HCT116 (cell line): ENCODE measurements at regions of chr7 and their contacts with region 1.

Region 1: GRCh38 chr7:38222481-38223096 is 44.5 kb downstream of the STARD3NL start:
- DNase-seq: peak; percentile 34
- ATAC-seq: peak; percentile 78
- H3K4me3 ChIP-seq: no peak overlapping the region
- H3K27ac ChIP-seq: no peak overlapping the region
- H3K4me1 ChIP-seq: no peaks in the 10 kb centered on the region
- H3K27me3 ChIP-seq: no peaks in the 10 kb centered on the region
- CTCF ChIP-seq: peak; percentile 68 to 87 (median 73); a peak in 5 of 6 replicates
- POLR2A ChIP-seq: no peak
- RAD21 ChIP-seq: peak; percentile 77

Region 2: DNA sequence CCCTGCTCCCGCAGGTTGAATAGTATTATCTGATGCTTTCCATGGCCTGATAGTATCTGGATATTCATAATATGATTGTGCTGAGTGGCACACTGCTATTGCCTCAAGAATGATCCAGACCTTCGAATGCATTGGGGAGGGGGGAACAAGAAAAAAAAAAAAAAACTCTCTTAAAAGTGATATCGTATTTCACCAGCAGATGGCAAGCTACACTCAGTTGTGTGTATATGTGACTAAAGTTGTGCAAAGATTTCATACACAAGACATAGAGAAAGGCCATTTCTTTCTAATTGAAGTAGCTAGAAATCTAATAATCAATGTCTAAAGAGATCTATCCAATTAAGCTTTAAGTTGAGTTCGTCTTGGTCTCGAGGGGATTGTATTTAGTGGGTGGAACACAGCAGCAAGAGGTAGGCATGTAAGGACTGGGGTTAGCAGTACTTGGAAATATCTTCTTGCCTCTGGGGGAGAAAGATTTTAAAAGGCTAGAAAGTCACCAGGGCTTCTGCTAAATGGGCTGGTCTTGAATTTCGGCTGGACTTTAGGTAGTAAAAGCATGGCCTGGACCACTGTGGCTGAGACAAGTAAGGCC is 321.3 kb before region 1 on chr7:
- CTCF ChIA-PET with region 1: no interaction called
- POLR2A ChIA-PET with region 1: no interaction called
- RAD21 ChIA-PET with region 1: interaction called in 1 of 2 experiments, 4 read pairs
- intact Hi-C with region 1: loop called (anchors 1 kb)
- DNase-seq: peak; percentile 13
- ATAC-seq: peak; percentile 55; the same call in 1 of the 2 replicates
- H3K4me3 ChIP-seq: no peak overlapping the region
- H3K27ac ChIP-seq: no peak overlapping the region
- H3K4me1 ChIP-seq: peaks cover 0 to 4% of the 10 kb centered on the region in 2 experiments; a peak in 1 of 4 replicates
- H3K27me3 ChIP-seq: no peaks in the 10 kb centered on the region
- CTCF ChIP-seq: peak; percentile 32 to 71 (median 50); a peak in 3 of 6 replicates
- POLR2A ChIP-seq: no peak
- RAD21 ChIP-seq: peak; percentile 65

Region 3: DNA sequence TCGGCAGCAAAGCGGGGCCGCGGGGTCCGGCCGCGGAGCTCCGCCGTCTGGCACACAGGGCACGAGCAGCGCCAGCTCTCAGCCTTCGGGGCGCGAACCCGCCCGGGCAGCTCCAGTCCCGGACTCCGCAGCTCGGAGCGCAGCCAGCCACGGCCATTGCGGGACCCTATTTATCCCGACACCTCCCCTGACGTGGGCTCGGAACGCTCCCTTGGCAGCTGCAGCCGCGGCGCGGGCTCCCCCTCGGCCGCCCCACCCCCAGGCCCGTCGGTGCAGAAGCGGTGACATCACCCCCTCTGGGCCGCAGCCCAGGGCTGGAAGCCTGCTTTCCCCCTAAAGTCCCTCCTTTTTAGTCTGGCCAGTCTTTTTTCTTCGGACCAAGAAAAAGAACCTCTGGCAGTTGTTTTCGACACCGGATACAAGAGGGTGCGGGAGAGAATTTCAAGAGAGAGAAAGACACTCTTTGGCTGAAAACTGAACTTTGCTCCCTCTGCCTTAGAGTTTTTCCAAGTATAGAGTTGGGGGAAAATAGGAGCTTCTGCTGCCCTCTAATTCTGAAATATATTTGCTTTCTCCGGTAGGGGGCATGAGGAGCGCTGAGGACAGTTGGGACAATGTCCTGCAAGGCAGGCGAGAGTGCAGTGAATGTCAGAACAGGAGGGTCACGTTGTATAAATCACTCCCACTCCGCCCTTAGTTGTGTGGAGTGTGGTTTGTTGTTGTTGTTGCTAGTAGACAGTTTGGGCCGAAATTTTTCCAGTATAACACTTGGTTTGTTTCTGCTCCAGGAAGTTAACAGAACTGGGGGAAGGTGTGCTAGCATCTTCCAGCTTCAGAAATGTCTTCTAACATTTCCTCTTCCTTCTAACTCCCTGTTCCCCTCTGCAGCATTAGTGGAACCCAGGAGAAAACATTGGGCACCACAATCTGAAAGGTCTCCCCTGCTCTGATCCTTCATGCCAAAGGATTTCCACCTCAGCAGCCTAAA is 305.6 kb before region 1 on chr7 and contains the start of gene SFRP4:
- CTCF ChIA-PET with region 1: interaction called, 3 read pairs
- POLR2A ChIA-PET with region 1: no interaction called
- RAD21 ChIA-PET with region 1: no interaction called
- intact Hi-C with region 1: loop called (anchors 5 kb)
- DNase-seq: peak; percentile 34
- ATAC-seq: peak; percentile 67
- H3K4me3 ChIP-seq: peak within 1 kb of the TSS; percentile 12 to 35
- H3K27ac ChIP-seq: no peak within 1 kb of the TSS
- H3K4me1 ChIP-seq: peaks cover 9 to 14% of the 10 kb centered on the region in 2 experiments; a peak in 2 of 4 replicates
- H3K27me3 ChIP-seq: peaks cover 3% of the 10 kb centered on the region; the same call in 1 of the 2 replicates
- CTCF ChIP-seq: peak; percentile 43 to 68 (median 65); a peak in 5 of 6 replicates
- POLR2A ChIP-seq: no peak
- RAD21 ChIP-seq: peak; percentile 55
- total RNA-seq, gene SFRP4: 0.25 TPM

Region 4: GRCh38 chr7:38107486-38107893 is 115.1 kb before region 1 on chr7:
- CTCF ChIA-PET with region 1: interaction called, 5 read pairs
- POLR2A ChIA-PET with region 1: no interaction called
- RAD21 ChIA-PET with region 1: no interaction called
- intact Hi-C with region 1: loop called (anchors 1 kb)
- DNase-seq: peak; percentile 48
- ATAC-seq: peak; percentile 94
- H3K4me3 ChIP-seq: no peak overlapping the region
- H3K27ac ChIP-seq: no peak overlapping the region
- H3K4me1 ChIP-seq: no peaks in the 10 kb centered on the region
- H3K27me3 ChIP-seq: peaks cover 20% of the 10 kb centered on the region
- CTCF ChIP-seq: peak; percentile 79 to 89 (median 79)
- POLR2A ChIP-seq: no peak
- RAD21 ChIP-seq: peak; percentile 72

Region 5: DNA sequence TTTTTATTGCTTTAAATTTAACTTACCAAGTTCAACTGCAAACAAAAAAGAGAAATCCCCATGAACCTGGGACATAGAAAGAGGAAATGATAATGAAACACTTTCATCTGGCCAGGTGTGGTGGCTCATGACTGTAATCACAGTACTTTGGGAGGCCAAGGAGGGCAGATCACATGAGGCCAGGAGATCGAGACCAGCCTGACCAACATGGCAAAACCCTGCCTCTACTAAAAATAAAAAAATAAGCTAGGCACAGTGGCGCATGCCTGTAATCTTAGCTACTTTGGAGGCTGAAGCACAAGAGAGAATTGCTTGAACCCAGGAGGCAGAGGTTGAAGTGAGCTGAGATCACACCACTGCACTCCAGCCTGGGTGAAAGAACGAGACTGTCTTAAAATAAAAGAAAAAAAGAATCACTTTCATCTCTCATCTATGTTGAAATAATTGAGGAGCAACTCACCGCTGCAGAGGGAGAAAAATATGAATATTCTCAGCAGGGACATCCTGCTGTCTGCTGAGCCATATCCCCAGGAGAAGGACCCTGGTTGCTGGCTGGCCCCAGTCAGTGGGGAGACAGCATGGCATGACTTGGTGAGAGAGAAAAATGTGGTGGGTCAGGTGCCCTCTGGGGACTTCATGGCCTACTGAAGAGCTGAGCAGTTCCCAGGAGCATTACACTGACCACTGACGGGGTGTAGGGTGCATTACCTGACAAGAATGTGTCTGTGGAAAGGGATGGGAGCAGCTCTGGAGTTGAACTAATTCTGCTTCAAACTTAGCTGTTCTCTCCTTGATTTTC is 73.7 kb after region 1 on chr7:
- CTCF ChIA-PET with region 1: no interaction called
- POLR2A ChIA-PET with region 1: no interaction called
- RAD21 ChIA-PET with region 1: no interaction called
- intact Hi-C with region 1: no loop called
- DNase-seq: no peak
- ATAC-seq: no peak
- H3K4me3 ChIP-seq: no peak overlapping the region
- H3K27ac ChIP-seq: no peak overlapping the region
- H3K4me1 ChIP-seq: no peaks in the 10 kb centered on the region
- H3K27me3 ChIP-seq: peaks cover 15% of the 10 kb centered on the region
- CTCF ChIP-seq: no peak
- POLR2A ChIP-seq: no peak
- RAD21 ChIP-seq: no peak

Region 6: GRCh38 chr7:38318803-38319416 is 96.3 kb after region 1 on chr7:
- CTCF ChIA-PET with region 1: interaction called, 5 read pairs
- POLR2A ChIA-PET with region 1: no interaction called
- RAD21 ChIA-PET with region 1: no interaction called
- intact Hi-C with region 1: loop called (anchors 5 kb)
- DNase-seq: peak; percentile 40
- ATAC-seq: peak; percentile 95
- H3K4me3 ChIP-seq: no peak overlapping the region
- H3K27ac ChIP-seq: no peak overlapping the region
- H3K4me1 ChIP-seq: peaks cover 4 to 10% of the 10 kb centered on the region in 2 experiments; a peak in 2 of 4 replicates
- H3K27me3 ChIP-seq: 0 out of 2 replicates have a peak, but pooled peaks cover 6% of the 10 kb centered on the region
- CTCF ChIP-seq: peak; percentile 50 to 78 (median 70)
- POLR2A ChIP-seq: no peak
- RAD21 ChIP-seq: peak; percentile 72

Region 7: DNA sequence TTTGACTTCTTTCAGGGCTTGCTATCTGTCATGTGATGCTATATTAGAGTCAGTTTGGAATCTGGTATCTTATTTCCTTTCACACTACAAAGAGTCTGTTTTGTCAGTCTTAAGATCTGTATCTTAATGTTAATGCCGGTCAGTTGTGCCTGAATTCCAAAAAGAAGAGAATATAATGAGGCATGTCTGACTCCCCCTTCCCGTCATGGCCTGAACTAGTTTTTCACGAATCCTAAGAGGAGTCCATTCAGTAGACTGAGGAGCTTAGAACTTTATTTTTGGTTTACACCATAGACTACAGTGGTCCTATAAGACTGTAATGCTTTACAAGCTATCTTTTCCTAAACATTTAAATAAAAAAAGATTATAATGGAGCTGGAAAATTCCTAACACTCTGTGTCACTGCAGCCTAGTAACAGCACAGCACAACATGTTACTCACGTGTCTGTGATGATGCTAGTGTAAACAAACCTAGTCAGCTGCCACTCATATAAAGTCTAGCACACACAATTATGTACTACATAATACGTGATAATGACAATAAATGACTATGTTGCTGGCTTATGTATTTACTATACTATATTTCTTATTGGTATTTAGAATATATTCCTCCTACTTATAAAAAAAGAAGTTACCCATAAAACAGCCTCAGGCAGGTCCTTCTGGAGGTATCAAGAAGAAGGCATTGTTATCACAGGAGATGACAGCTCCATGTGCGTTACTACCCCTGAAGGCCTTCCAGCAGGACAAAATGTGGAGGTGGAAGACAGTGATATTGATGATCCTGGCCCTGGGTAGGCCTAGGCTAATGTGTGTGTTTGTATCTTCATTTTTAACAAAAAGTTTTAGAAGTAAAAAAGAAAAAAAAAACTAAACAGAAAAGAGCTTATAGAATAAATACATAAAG is 635.9 kb after region 1 on chr7:
- CTCF ChIA-PET with region 1: no interaction called
- POLR2A ChIA-PET with region 1: no interaction called
- RAD21 ChIA-PET with region 1: no interaction called
- intact Hi-C with region 1: no loop called
- DNase-seq: no peak
- ATAC-seq: no peak
- H3K4me3 ChIP-seq: no peak overlapping the region
- H3K27ac ChIP-seq: no peak overlapping the region
- H3K4me1 ChIP-seq: peaks cover 5% of the 10 kb centered on the region in 2 experiments
- H3K27me3 ChIP-seq: no peaks in the 10 kb centered on the region
- CTCF ChIP-seq: no peak
- POLR2A ChIP-seq: no peak
- RAD21 ChIP-seq: no peak